ENCODE measurements at regions of chr1 and their contacts with region 1.

Region 1: DNA sequence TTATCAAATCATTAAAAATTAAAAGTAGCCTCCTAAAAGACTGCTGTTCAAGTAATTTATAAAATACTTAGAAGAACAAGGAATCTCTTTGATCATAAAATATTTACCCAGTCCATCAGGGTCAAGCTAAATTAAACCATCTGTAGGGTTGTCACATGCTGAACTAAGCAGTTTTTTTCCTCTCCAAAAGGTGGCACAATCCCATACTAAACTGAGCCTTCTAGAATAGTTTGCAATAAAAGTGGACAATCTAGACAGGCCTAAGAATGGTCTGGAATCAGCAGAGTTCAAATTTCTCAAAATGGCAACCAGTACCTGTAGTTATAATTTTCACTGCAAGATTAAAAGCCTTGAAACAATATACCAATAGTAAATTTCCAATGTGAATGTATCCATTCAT is 194.8 kb downstream of the EIF4G3 start:
- DNase-seq: no peak
- H3K4me3 ChIP-seq: no peak overlapping the region
- H3K27ac ChIP-seq: no peak overlapping the region
- H3K4me1 ChIP-seq: peaks cover 0 to 4% (median 0%) of the 10 kb centered on the region in 4 donors
- H3K27me3 ChIP-seq: no peaks in the 10 kb centered on the region
- CTCF ChIP-seq: peak in 1 of 4 experiments; percentile 36
- EP300 ChIP-seq: no peak
- POLR2A ChIP-seq: no peak

Region 2: DNA sequence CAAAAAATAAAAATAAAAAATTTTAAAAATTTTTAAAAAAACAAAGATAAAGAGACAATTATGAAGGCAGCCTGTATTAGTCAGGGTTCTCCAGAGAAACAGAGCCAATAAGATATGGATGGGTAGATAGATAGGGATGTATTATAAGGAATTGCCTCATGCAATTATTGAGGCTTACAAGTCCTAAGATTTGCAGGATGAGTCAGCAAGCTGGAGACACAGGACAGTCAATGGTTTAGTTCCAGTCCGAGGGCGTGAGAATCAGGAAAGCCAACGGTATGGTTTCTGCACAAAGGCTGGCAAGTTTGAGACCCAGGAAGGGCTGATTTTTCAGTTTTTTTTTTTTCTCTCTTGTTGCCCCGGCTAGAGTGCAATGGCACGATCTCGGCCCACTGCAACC is 218.9 kb after region 1 on chr1:
- intact Hi-C with region 1: loop called (anchors 2 kb)
- DNase-seq: no peak
- H3K4me3 ChIP-seq: no peak overlapping the region
- H3K27ac ChIP-seq: no peak overlapping the region
- H3K4me1 ChIP-seq: no peaks in the 10 kb centered on the region
- H3K27me3 ChIP-seq: no peaks in the 10 kb centered on the region
- CTCF ChIP-seq: no peak
- EP300 ChIP-seq: no peak
- POLR2A ChIP-seq: no peak